ENCODE measurements at regions of chr6 and their contacts with region 1.

Region 1: DNA sequence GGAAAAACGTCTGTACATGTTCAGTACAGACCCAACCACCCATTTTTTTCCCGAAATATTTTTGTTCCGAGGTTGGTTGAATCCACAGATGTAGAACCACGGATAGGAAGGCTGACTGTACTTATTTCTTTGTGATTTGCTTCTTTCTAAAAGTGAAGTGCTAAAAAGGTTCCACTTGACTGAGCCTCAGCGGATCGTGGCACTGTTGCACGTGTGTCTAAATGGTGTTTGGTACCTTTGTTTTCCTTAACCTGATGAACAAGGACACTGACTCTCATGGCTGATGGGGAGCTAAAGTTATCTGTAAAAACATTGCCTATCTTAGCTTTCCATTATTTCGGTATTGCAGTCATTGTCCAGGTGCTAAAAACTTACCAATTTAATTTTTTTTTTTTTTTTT is 6.2 kb downstream of the BPHL start:
- DNase-seq: no peak

Region 2: GRCh38 chr6:3209114-3210023 is 84.7 kb after region 1 on chr6:
- intact Hi-C with region 1: no loop called
- DNase-seq: peak; percentile 91

Region 3: DNA sequence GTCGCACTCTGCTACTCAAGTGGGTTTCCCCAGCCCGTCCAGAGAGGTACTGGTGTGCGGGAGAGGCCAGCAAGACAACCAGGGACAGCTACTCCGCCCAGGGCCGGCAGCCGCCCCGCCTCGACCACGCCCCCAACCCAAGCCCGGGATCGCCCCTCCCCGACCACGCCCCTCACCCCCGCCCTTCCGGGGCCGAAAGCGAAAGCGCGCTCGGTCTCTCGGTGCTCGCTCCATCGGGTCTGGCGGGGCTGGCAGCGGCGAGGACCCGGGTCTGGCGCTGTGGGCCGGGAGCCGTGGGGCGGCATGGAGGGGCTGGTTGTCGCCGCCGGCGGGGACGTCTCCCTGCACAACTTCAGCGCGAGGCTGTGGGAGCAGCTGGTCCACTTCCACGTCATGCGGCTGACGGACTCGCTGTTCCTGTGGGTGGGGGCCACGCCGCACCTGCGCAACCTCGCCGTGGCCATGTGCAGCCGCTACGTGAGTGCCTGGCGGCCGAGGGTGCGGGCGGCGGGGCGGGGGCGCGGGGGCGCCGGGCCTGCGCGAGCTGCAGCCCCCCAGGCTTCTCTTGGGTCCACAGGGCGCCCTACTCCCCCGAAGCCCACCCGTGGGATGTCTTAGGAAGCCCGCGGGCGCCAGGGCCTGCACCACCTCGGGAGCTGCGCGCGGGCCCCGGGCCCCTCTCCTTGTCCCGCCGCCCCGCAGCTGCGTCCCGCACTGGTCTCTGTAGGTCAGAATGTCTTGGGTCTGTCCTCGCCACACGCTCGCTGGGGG is 134.2 kb after region 1 on chr6 and contains the start of gene PSMG4:
- intact Hi-C with region 1: loop called (anchors 5 to 10 kb)
- DNase-seq: peak; percentile 99
- total RNA-seq, gene PSMG4: 14.3 to 18.0 TPM

Measured in posterior vena cava (tissue), 2 donors.